ENCODE measurements at regions of chr1 and their contacts with region 1.

Region 1: GRCh38 chr1:226882631-226883409 is 12.4 kb downstream of the PSEN2 start:
- DNase-seq: peak; percentile 86
- ATAC-seq: peak; percentile 96
- H3K4me3 ChIP-seq: peak overlapping the region; percentile 53
- H3K27ac ChIP-seq: peak overlapping the region; percentile 80
- H3K4me1 ChIP-seq: peaks cover 53% of the 10 kb centered on the region
- H3K27me3 ChIP-seq: no peaks in the 10 kb centered on the region
- CTCF ChIP-seq: no peak
- EP300 ChIP-seq: peak in 1 of 2 experiments; percentile 54; a peak in 2 of 4 replicates
- POLR2A ChIP-seq: no peak; the same call in 1 of the 2 replicates
- RAD21 ChIP-seq: no peak

Region 2: GRCh38 chr1:226870401-226871279 is 12.2 kb before region 1 on chr1 and contains the start of gene PSEN2:
- CTCF ChIA-PET with region 1: interaction called, 6 read pairs
- POLR2A ChIA-PET with region 1: interaction called, 11 read pairs
- RAD21 ChIA-PET with region 1: interaction called, 11 read pairs
- SMC1A ChIA-PET with region 1: interaction called, 20 read pairs
- in situ Hi-C with region 1: no loop called
- intact Hi-C with region 1: no loop called
- DNase-seq: no peak
- ATAC-seq: peak; percentile 98
- H3K4me3 ChIP-seq: peak within 1 kb of the TSS; percentile 88
- H3K27ac ChIP-seq: no peak within 1 kb of the TSS; the same call in 1 of the 2 replicates
- H3K4me1 ChIP-seq: peaks cover 9% of the 10 kb centered on the region
- H3K27me3 ChIP-seq: no peaks in the 10 kb centered on the region
- CTCF ChIP-seq: no peak
- EP300 ChIP-seq: no peak
- POLR2A ChIP-seq: peak; percentile 64
- RAD21 ChIP-seq: no peak
- polyA plus RNA-seq, gene PSEN2: 0.90 to 2.5 TPM

Region 3: GRCh38 chr1:226940029-226940805 is 57.4 kb after region 1 on chr1 and contains the start of gene COQ8A:
- CTCF ChIA-PET with region 1: interaction called, 5 read pairs
- POLR2A ChIA-PET with region 1: interaction called, 3 read pairs
- RAD21 ChIA-PET with region 1: interaction called, 11 read pairs
- SMC1A ChIA-PET with region 1: interaction called, 5 read pairs
- in situ Hi-C with region 1: no loop called
- intact Hi-C with region 1: no loop called
- DNase-seq: peak; percentile 97
- ATAC-seq: peak; percentile 98
- H3K4me3 ChIP-seq: peak within 1 kb of the TSS; percentile 76
- H3K27ac ChIP-seq: peak within 1 kb of the TSS; percentile 83
- H3K4me1 ChIP-seq: peaks cover 5% of the 10 kb centered on the region; the same call in 1 of the 2 replicates
- H3K27me3 ChIP-seq: no peaks in the 10 kb centered on the region
- CTCF ChIP-seq: no peak
- EP300 ChIP-seq: no peak
- POLR2A ChIP-seq: no peak; the same call in 1 of the 2 replicates
- RAD21 ChIP-seq: no peak
- polyA plus RNA-seq, gene COQ8A: 0.72 to 1.9 TPM